HEK293 (cell line): ENCODE measurements at regions of chr17 and their contacts with region 1.

Region 1: DNA sequence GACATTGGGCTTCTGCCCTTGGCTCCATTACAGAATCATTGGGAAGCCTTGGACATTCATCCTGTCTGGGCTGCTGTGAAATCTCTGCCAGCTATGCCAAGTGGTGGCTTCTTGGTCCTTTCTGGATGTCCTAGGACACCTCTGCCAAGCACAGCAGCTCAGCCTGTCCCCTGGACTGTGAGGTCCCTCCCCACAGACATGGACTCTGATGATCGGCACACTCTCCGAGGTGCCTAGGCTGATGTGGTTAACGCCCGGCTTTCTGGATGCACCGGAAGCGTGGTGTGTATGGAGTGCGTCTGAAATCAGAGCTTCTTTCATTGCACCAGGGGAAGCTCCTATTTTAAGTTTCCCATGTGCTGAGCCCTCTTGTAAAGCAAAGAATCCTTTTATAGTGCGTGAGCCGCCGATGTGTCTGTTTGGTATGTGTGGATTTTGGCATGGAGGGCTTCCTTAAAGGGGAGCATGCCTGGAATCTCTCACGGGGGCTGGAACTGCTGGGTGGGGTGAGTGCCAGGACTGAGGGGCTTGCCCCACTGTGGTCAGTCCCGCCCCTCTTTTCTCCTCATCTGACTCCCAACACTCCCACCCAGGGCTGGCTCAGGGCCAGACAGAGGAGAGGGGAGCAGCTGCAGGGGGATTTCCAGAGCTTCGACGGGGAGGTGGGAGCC is 7.0 kb upstream of the ARHGAP23 start:
- H3K4me3 ChIP-seq: no peak overlapping the region
- H3K27ac ChIP-seq: no peak overlapping the region
- H3K4me1 ChIP-seq: no peaks in the 10 kb centered on the region; the same call in 1 of the 2 replicates
- CTCF ChIP-seq: no peak

Region 2: DNA sequence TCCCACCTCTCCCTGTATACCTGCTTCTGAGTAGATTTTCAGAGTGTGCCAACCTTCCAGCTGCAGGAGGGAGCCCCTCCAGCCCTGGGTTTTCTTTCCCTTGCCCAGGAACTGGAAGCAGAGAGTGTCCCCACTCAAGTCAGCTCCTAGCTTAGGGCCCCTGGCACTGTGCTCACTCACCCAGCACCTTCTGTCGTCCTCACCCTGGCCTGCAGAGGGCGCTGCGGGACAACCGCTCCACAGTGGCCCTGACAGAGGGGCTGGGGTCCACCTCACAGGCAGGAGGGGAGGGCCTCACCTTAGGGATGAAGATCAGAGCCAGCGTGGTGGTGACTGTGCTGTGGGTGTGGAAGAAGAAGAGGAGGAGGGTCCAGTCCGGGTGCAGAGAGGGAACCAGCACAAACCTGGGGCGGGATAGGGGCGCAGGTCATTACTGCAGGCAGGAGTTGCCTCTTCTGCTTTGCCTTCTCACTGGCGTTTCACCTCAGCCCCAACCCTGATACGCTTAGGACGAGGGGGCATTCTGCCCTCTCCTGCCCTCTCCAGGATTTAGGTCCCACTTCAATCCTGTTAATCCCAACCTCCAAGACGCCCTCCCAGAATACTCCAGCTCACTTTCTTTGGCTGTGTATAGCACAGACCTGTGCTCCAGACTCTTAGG is 87.5 kb before region 1 on chr17:
- CTCF ChIA-PET with region 1: interaction called, 19 read pairs
- POLR2A ChIA-PET with region 1: no interaction called
- H3K4me3 ChIP-seq: no peak overlapping the region
- H3K27ac ChIP-seq: no peak overlapping the region
- H3K4me1 ChIP-seq: no peaks in the 10 kb centered on the region
- CTCF ChIP-seq: peak; percentile 83

Region 3: DNA sequence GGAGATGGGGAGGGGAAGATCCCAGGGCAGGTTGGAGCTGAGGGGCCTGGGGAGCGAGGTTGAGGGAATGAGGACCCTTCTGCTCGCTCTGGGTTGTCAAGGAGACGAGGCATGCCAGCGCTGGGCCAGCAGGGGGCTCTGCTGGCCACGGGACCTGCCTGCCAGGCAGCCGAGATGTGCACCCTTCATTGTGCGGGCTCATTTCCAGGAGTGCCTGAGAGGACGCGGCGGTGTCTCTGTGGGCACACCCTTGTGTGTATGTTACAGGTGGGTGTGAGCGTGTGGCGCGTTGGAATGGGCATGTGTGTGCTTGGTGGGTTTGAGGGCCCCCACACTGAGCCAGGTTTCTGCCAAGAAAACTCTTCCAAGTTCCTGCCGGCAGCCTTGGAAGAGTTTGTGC is 22.8 kb after region 1 on chr17:
- CTCF ChIA-PET with region 1: interaction called, 52 read pairs
- POLR2A ChIA-PET with region 1: interaction called, 11 read pairs
- H3K4me3 ChIP-seq: no peak overlapping the region
- H3K27ac ChIP-seq: no peak overlapping the region
- H3K4me1 ChIP-seq: no peaks in the 10 kb centered on the region
- CTCF ChIP-seq: peak; percentile 94

Region 4: GRCh38 chr17:38464723-38465390 is 43.6 kb after region 1 on chr17:
- CTCF ChIA-PET with region 1: interaction called, 10 read pairs
- POLR2A ChIA-PET with region 1: no interaction called
- H3K4me3 ChIP-seq: peak overlapping the region; percentile 65
- H3K27ac ChIP-seq: peak overlapping the region; percentile 37; the same call in 1 of the 2 replicates
- H3K4me1 ChIP-seq: peaks cover 11% of the 10 kb centered on the region
- CTCF ChIP-seq: no peak

Region 5: GRCh38 chr17:38485146-38485468 is 63.8 kb after region 1 on chr17:
- CTCF ChIA-PET with region 1: interaction called, 14 read pairs
- POLR2A ChIA-PET with region 1: no interaction called
- H3K4me3 ChIP-seq: no peak overlapping the region
- H3K27ac ChIP-seq: no peak overlapping the region
- H3K4me1 ChIP-seq: no peaks in the 10 kb centered on the region
- CTCF ChIP-seq: no peak